GM10248 (cell line): ENCODE measurements at regions of chr19 and their contacts with region 1.

Region 1: DNA sequence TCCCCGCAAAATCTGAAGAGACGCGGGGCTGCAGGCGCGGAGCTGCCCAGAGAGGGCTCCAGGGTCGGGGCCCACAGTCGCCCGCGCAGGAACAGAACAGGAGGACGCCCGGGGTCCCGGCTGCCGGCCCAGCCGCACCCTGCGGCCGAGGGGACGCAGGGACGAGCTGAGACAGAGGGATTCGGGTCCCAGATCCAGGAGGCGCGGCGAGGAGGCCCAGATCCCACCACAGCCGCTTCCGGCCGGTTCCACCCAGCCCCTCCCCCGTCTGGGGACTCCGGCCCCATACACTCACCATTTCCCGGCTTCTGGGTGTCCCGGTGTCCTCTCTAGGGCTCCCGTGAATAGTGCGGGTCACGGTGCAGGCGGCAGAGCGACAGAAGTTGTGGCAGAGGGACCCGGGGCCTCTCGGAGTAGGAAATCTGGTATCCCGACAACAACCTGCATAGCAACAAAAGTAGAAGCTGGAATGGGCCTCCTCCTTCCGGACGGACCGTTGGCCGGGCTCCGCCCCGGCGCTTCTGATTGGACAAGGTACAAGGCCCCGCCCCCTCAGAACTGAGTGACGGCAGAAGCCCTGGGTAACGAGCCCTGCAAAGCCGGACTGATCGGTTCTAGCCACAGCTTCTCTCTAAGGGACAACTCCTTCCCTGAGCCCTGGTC is at the start of gene ZNF20:
- DNase-seq: peak; percentile 96
- CTCF ChIP-seq: peak; percentile 5

Region 2: DNA sequence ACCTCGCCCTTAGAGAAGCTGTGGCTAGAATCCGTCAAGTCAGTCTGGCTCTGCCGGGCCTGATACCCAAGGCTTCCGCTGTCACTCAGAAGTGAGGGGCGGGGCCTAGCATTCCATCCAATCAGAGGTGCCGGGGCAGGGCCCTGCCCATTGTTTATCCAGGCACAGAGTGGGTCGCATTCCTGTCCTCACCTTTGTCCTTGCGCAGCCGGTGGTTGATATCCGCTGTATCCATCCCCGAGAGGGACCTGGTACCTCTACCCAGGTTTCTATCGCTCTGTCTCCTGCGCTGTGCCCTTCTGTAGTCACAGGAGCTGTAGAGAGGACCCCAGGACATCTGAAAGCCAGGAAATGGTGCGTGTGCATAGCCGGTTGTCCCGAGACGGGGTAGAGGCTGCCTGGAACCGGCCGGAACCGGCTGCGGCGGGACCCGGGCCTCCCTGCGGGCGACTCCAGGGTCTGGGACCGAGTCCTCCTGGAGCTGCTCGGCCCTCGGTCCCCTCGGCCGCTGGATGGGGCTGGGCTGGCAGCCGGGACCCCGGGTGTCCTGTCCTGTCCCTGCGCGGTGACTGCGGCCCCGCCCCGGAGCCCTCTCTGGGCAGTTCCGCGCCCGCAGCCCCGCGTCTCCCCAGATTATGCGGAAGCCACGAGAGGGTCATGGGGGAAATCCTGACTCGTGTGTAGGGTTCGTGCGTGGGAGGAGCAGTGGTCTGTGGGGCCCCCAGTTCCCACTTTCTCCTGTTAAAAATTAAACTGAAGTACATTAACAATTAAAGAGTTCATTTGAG is 175.0 kb before region 1 on chr19 and contains the start of gene ZNF763:
- CTCF ChIA-PET with region 1: interaction called, 17 read pairs
- POLR2A ChIA-PET with region 1: no interaction called
- DNase-seq: peak; percentile 92
- CTCF ChIP-seq: no peak

Region 3: GRCh38 chr19:12052497-12053169 is 87.4 kb before region 1 on chr19 and contains the start of gene ZNF878:
- CTCF ChIA-PET with region 1: interaction called, 10 read pairs
- POLR2A ChIA-PET with region 1: no interaction called
- DNase-seq: peak; percentile 87
- CTCF ChIP-seq: peak; percentile 35

Region 4: GRCh38 chr19:12156223-12157058 is 16.4 kb after region 1 on chr19 and contains the start of gene ZNF625:
- CTCF ChIA-PET with region 1: interaction called, 16 read pairs
- POLR2A ChIA-PET with region 1: interaction called, 4 read pairs
- DNase-seq: peak; percentile 85
- CTCF ChIP-seq: no peak

Region 5: GRCh38 chr19:12202250-12202649 is 62.2 kb after region 1 on chr19:
- CTCF ChIA-PET with region 1: no interaction called
- POLR2A ChIA-PET with region 1: no interaction called
- DNase-seq: no peak
- CTCF ChIP-seq: no peak

Region 6: DNA sequence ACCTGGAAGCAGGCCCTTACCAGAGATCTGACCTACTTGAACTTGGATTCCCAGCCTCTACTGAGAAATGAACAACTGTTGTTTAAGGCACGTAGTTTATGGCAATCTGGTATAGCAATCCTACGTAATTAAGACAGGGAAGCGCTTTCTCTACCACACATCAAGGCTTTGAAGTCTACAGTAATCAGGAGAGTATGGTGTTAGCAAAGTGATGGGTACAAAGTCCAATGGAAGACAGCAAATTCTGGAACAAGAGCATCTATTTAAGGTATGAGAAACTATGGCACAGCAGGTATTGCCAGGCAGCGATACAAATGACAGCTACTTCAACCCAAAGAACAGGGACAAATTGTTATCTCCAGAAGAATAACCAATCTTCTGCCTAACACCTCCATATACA is 190.3 kb after region 1 on chr19:
- CTCF ChIA-PET with region 1: no interaction called
- POLR2A ChIA-PET with region 1: no interaction called
- DNase-seq: no peak
- CTCF ChIP-seq: no peak